CD4-positive, alpha-beta memory T cell (primary cell): ENCODE measurements at regions of chr10 and their contacts with region 1.

Region 1: DNA sequence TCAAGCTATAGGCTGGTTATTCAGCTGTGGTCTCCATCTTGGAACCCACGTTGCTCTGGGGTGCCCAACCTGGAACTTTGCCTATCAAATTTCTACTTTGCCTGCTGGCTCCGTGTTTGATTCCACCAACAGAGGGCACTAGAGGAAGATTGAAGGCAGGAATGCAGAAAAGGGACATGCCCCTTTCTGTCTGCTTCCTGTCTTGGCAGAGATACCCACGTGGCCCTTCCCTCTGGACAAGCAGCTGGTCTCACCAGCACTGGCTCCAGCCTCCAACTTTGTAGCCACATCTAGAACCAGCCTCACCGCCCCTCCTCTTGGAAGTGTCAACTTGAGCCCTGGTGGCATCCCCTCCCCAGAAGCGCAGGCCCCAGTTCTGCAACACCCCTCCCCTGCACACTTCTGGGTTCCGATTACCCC is 52.1 kb upstream of the ZNF438 start:
- DNase-seq: peak; percentile 40 to 59 (median 50)
- H3K4me3 ChIP-seq: no peak overlapping the region
- H3K4me3 Mint-ChIP-seq: no peak overlapping the region
- H3K27ac ChIP-seq: no peak overlapping the region
- H3K27ac Mint-ChIP-seq: no peak overlapping the region
- H3K4me1 ChIP-seq: no peaks in the 10 kb centered on the region
- H3K4me1 Mint-ChIP-seq: peaks cover 0 to 1% (median under 1%) of the 10 kb centered on the region in 4 donors
- H3K27me3 ChIP-seq: no peaks in the 10 kb centered on the region
- H3K27me3 Mint-ChIP-seq: no peaks in the 10 kb centered on the region

Region 2: GRCh38 chr10:31242902-31243301 is 159.1 kb after region 1 on chr10:
- CTCF ChIA-PET with region 1: no interaction called
- POLR2A ChIA-PET with region 1: no interaction called
- intact Hi-C with region 1: no loop called
- DNase-seq: peak in 1 of 5 donors; percentile 0
- H3K4me3 ChIP-seq: no peak overlapping the region
- H3K4me3 Mint-ChIP-seq: no peak overlapping the region
- H3K27ac ChIP-seq: no peak overlapping the region
- H3K27ac Mint-ChIP-seq: no peak overlapping the region
- H3K4me1 ChIP-seq: no peaks in the 10 kb centered on the region
- H3K4me1 Mint-ChIP-seq: peaks cover 0 to 6% (median 2%) of the 10 kb centered on the region in 4 donors
- H3K27me3 ChIP-seq: no peaks in the 10 kb centered on the region
- H3K27me3 Mint-ChIP-seq: peaks cover 0 to 2% of the 10 kb centered on the region in 2 donors

Region 3: GRCh38 chr10:31353574-31353973 is 269.8 kb after region 1 on chr10:
- CTCF ChIA-PET with region 1: no interaction called
- POLR2A ChIA-PET with region 1: no interaction called
- intact Hi-C with region 1: loop called (anchors 10 kb)
- DNase-seq: peak; percentile 14 to 40 (median 21)
- H3K4me3 ChIP-seq: no peak overlapping the region
- H3K4me3 Mint-ChIP-seq: no peak overlapping the region
- H3K27ac ChIP-seq: no peak overlapping the region
- H3K27ac Mint-ChIP-seq: peak overlapping the region in 2 of 7 donors; percentile 2 to 30
- H3K4me1 ChIP-seq: peaks cover 37% of the 10 kb centered on the region
- H3K4me1 Mint-ChIP-seq: peaks cover 39 to 67% (median 51%) of the 10 kb centered on the region in 4 donors
- H3K27me3 ChIP-seq: no peaks in the 10 kb centered on the region
- H3K27me3 Mint-ChIP-seq: no peaks in the 10 kb centered on the region

Region 4: DNA sequence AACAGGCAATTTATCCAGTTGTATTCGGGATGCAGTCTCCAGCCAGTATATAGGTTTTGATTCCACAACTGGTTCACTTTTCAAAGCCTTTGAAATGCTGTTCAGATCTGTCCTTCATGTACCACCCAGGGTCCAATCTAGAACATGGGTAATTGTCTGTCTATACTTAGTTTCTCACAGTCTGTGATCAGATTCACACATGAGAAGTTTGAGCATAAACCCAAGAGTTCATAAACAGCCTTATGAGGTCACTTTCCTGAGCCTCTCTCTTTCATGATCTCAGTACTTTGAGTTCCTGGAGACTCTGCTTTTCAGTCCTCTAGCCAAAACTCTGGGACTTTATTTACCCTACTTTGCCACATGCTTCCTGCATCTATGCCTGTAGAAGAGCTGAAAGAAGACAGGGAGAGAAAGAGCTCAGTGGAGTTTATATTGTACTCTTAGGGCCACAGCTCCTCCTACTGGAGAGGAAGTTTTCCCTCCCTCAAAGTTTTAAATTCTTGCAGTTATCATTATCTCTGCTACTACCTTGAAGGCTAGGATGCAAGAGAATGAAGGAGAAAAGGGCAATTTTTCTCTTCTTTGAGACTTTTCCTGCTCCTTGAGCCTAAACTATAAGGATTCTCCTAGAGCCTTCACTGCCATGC is 407.2 kb after region 1 on chr10:
- CTCF ChIA-PET with region 1: interaction called, 4 read pairs
- POLR2A ChIA-PET with region 1: no interaction called
- intact Hi-C with region 1: loop called (anchors 2 kb)
- DNase-seq: peak in 4 of 5 donors; percentile 23 to 39 (median 30)
- H3K4me3 ChIP-seq: no peak overlapping the region
- H3K4me3 Mint-ChIP-seq: no peak overlapping the region
- H3K27ac ChIP-seq: no peak overlapping the region
- H3K27ac Mint-ChIP-seq: no peak overlapping the region
- H3K4me1 ChIP-seq: no peaks in the 10 kb centered on the region
- H3K4me1 Mint-ChIP-seq: peaks cover 0 to 5% (median 2%) of the 10 kb centered on the region in 4 donors
- H3K27me3 ChIP-seq: no peaks in the 10 kb centered on the region
- H3K27me3 Mint-ChIP-seq: no peaks in the 10 kb centered on the region

Region 5: GRCh38 chr10:31808258-31809218 is 724.8 kb after region 1 on chr10:
- CTCF ChIA-PET with region 1: no interaction called
- POLR2A ChIA-PET with region 1: no interaction called
- intact Hi-C with region 1: loop called (anchors 2 kb)
- DNase-seq: peak in 4 of 5 donors; percentile 44 to 50 (median 48)
- H3K4me3 ChIP-seq: no peak overlapping the region
- H3K4me3 Mint-ChIP-seq: peak overlapping the region in 4 of 8 donors; percentile 26 to 71 (median 56)
- H3K27ac ChIP-seq: no peak overlapping the region
- H3K27ac Mint-ChIP-seq: peak overlapping the region in 5 of 7 donors; percentile 71 to 94 (median 88)
- H3K4me1 ChIP-seq: peaks cover 4% of the 10 kb centered on the region
- H3K4me1 Mint-ChIP-seq: peaks cover 3 to 7% (median 4%) of the 10 kb centered on the region in 4 donors
- H3K27me3 ChIP-seq: no peaks in the 10 kb centered on the region
- H3K27me3 Mint-ChIP-seq: no peaks in the 10 kb centered on the region